ENCODE measurements at regions of chr6 and their contacts with region 1.

Region 1: DNA sequence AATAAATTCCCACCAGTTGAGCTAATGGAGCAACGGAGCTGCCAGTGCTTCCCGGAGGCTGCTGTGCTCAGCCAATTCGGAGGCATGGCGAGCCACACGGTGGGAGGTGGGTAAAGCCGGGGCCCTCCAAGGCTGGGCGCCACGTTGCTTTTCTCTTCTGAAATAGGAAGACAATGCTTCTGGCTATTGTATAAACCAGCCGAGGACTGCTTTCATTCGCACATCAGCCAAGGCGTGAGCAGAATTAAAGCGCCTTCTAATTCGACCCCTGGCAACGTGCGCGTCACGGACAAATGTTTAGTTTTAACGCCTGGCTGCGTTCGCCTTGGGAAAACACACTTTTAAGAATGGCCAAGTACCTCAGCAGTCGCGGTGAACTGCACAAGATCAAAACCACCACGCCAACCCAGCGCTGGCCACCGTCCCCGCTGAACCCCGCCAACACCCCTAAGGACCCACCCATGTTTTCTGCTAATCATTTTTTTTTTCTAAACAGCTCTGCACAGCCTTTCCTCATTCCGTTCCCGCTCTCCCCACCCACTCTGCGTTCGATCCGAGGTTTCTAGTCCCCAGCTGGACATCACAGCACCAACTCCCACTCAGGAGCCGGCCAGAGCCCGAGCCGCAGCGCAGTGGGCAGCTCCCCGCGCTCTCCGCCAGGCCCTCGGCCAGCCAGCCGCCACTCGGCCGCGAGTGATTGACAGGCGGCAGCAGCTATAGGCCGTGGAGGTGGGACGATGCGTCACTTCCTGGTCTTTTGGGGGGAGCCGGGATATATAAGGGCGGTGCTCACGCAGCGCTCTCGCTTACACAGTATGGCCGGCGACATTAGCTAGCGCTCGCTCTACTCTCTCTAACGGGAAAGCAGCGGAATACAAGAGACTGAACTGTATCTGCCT is at the start of gene AMD1:
- DNase-seq: peak; percentile 95
- ATAC-seq: peak; percentile 91
- H3K4me3 ChIP-seq: peak within 1 kb of the TSS; percentile 96 to 99 (median 98)
- H3K27ac ChIP-seq: peak within 1 kb of the TSS; percentile 93
- H3K4me1 ChIP-seq: peaks cover 43% of the 10 kb centered on the region
- H3K27me3 ChIP-seq: no peaks in the 10 kb centered on the region; a peak in 1 of 5 replicates
- CTCF ChIP-seq: no peak
- EP300 ChIP-seq: peak in 1 of 2 experiments; percentile 24; a peak in 1 of 4 replicates
- POLR2A ChIP-seq: peak; percentile 99 to 100
- RAD21 ChIP-seq: no peak
- total RNA-seq, gene AMD1: 123 and 180 TPM in 2 replicates

Region 2: GRCh38 chr6:110567957-110568696 is 306.1 kb before region 1 on chr6:
- CTCF ChIA-PET with region 1: no interaction called
- POLR2A ChIA-PET with region 1: interaction called, 14 read pairs
- in situ Hi-C with region 1: no loop called
- intact Hi-C with region 1: no loop called
- DNase-seq: no peak
- ATAC-seq: no peak
- H3K4me3 ChIP-seq: no peak overlapping the region
- H3K27ac ChIP-seq: peak overlapping the region; percentile 94
- H3K4me1 ChIP-seq: peaks cover 88% of the 10 kb centered on the region
- H3K27me3 ChIP-seq: no peaks in the 10 kb centered on the region
- CTCF ChIP-seq: no peak
- EP300 ChIP-seq: no peak
- POLR2A ChIP-seq: no peak
- RAD21 ChIP-seq: no peak

Region 3: GRCh38 chr6:110703010-110703905 is 171.0 kb before region 1 on chr6:
- CTCF ChIA-PET with region 1: no interaction called
- POLR2A ChIA-PET with region 1: interaction called, 12 read pairs
- in situ Hi-C with region 1: no loop called
- intact Hi-C with region 1: no loop called
- DNase-seq: no peak
- ATAC-seq: peak; percentile 44; the same call in 2 of the 3 replicates
- H3K4me3 ChIP-seq: no peak overlapping the region; a peak in 1 of 6 replicates
- H3K27ac ChIP-seq: peak overlapping the region; percentile 1
- H3K4me1 ChIP-seq: peaks cover 34% of the 10 kb centered on the region
- H3K27me3 ChIP-seq: no peaks in the 10 kb centered on the region
- CTCF ChIP-seq: no peak
- EP300 ChIP-seq: no peak
- POLR2A ChIP-seq: no peak
- RAD21 ChIP-seq: no peak

Region 4: DNA sequence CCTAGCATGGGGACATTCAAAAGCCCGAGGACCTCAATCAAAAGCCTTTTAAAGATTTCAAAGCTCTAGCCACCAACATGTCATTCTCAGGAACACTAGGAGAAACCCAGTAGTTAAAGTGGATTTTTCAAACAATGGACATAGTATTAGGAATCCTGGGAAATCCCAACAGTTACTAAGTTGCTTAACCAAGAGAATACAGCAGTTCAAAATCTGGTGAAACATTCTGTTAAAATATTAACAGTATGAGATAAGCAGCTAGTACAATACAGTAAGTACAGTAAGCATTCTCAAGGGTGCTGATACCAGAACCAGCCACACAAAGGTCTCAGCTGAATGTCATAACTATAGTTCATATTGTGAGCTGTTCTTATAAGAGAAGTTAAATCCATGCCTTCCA is 127.5 kb before region 1 on chr6:
- CTCF ChIA-PET with region 1: no interaction called
- POLR2A ChIA-PET with region 1: interaction called, 29 read pairs
- in situ Hi-C with region 1: no loop called
- intact Hi-C with region 1: no loop called
- DNase-seq: peak; percentile 93
- ATAC-seq: peak; percentile 99
- H3K4me3 ChIP-seq: peak overlapping the region; percentile 47 to 63 (median 48); a peak in 5 of 6 replicates
- H3K27ac ChIP-seq: peak overlapping the region; percentile 81
- H3K4me1 ChIP-seq: peaks cover 57% of the 10 kb centered on the region
- H3K27me3 ChIP-seq: no peaks in the 10 kb centered on the region
- CTCF ChIP-seq: no peak
- EP300 ChIP-seq: peak in 1 of 2 experiments; percentile 79; a peak in 2 of 4 replicates
- POLR2A ChIP-seq: no peak; a peak in 2 of 4 replicates
- RAD21 ChIP-seq: no peak

Region 5: GRCh38 chr6:110841266-110841665 is 33.0 kb before region 1 on chr6:
- CTCF ChIA-PET with region 1: no interaction called
- POLR2A ChIA-PET with region 1: interaction called, 10 read pairs
- in situ Hi-C with region 1: no loop called
- intact Hi-C with region 1: no loop called
- DNase-seq: no peak
- ATAC-seq: no peak
- H3K4me3 ChIP-seq: no peak overlapping the region
- H3K27ac ChIP-seq: no peak overlapping the region
- H3K4me1 ChIP-seq: no peaks in the 10 kb centered on the region
- H3K27me3 ChIP-seq: no peaks in the 10 kb centered on the region
- CTCF ChIP-seq: no peak
- EP300 ChIP-seq: no peak
- POLR2A ChIP-seq: no peak
- RAD21 ChIP-seq: no peak

Region 6: GRCh38 chr6:110938171-110938570 is 63.9 kb after region 1 on chr6:
- CTCF ChIA-PET with region 1: no interaction called
- POLR2A ChIA-PET with region 1: no interaction called
- in situ Hi-C with region 1: no loop called
- intact Hi-C with region 1: no loop called
- DNase-seq: no peak
- ATAC-seq: no peak
- H3K4me3 ChIP-seq: no peak overlapping the region
- H3K27ac ChIP-seq: no peak overlapping the region
- H3K4me1 ChIP-seq: 0 out of 2 replicates have a peak, but pooled peaks cover 7% of the 10 kb centered on the region
- H3K27me3 ChIP-seq: no peaks in the 10 kb centered on the region; a peak in 1 of 5 replicates
- CTCF ChIP-seq: no peak
- EP300 ChIP-seq: no peak
- POLR2A ChIP-seq: no peak
- RAD21 ChIP-seq: no peak

Region 7: GRCh38 chr6:110949679-110950285 is 75.6 kb after region 1 on chr6:
- CTCF ChIA-PET with region 1: no interaction called
- POLR2A ChIA-PET with region 1: interaction called, 5 read pairs
- in situ Hi-C with region 1: no loop called
- intact Hi-C with region 1: loop called (anchors 5 kb)
- DNase-seq: no peak
- ATAC-seq: no peak
- H3K4me3 ChIP-seq: no peak overlapping the region
- H3K27ac ChIP-seq: no peak overlapping the region
- H3K4me1 ChIP-seq: peaks cover 45% of the 10 kb centered on the region
- H3K27me3 ChIP-seq: no peaks in the 10 kb centered on the region
- CTCF ChIP-seq: peak; percentile 23; the same call in 1 of the 2 replicates
- EP300 ChIP-seq: no peak
- POLR2A ChIP-seq: no peak
- RAD21 ChIP-seq: no peak

Region 8: GRCh38 chr6:110981202-110981600 is 107.0 kb after region 1 on chr6:
- CTCF ChIA-PET with region 1: no interaction called
- POLR2A ChIA-PET with region 1: interaction called, 10 read pairs
- in situ Hi-C with region 1: no loop called
- intact Hi-C with region 1: no loop called
- DNase-seq: no peak
- ATAC-seq: no peak
- H3K4me3 ChIP-seq: peak overlapping the region; percentile 74 to 85 (median 82)
- H3K27ac ChIP-seq: peak overlapping the region; percentile 86
- H3K4me1 ChIP-seq: peaks cover 44% of the 10 kb centered on the region
- H3K27me3 ChIP-seq: no peaks in the 10 kb centered on the region; a peak in 1 of 5 replicates
- CTCF ChIP-seq: no peak
- EP300 ChIP-seq: no peak
- POLR2A ChIP-seq: no peak
- RAD21 ChIP-seq: no peak

Measured in HepG2 (cell line).